Left lung (tissue), 14 donors: ENCODE measurements at regions of chr10 and their contacts with region 1.

Region 1: DNA sequence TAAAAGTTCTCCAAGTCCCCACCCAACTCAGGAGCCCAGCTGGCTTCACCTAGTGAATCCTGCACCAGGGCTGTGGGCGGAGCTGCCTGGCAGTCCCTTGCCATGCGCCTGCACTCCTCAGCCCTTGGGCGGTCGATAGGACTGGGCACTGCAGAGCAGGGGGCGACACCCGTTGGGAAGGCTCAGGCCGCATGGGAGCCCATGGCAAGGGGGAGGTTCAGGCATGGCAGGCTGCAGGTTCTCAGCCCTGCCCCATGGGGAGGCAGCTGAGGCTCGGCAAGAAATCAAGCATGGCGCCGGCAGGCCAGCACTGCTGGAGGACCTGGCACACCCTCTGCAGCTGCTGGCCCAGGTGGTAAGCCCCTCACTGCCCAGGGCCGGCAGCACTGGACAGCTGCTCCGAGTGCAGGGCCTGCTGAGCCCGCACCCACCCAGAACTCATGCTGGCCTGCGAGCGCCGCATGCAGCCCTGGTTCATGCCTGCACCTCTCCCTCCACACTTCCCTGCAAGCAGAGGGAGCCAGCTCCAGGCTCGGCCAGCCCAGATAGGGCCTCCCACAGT is 149.9 kb downstream of the ANKRD30A start:
- DNase-seq: peak in 1 of 4 donors; percentile 59
- ATAC-seq: no peak
- H3K4me3 ChIP-seq: no peak overlapping the region
- H3K27ac ChIP-seq: no peak overlapping the region
- H3K4me1 ChIP-seq: no peaks in the 10 kb centered on the region
- H3K27me3 ChIP-seq: no peaks in the 10 kb centered on the region
- CTCF ChIP-seq: no peak

Region 2: GRCh38 chr10:37125191-37125747 is 150.0 kb before region 1 on chr10 and contains the start of gene ANKRD30A:
- intact Hi-C with region 1: loop called in 1 of 2 experiments (anchors 5 kb)
- DNase-seq: peak in 1 of 4 donors; percentile 73
- ATAC-seq: no peak
- H3K4me3 ChIP-seq: no peak within 1 kb of the TSS
- H3K27ac ChIP-seq: no peak within 1 kb of the TSS
- H3K4me1 ChIP-seq: no peaks in the 10 kb centered on the region
- H3K27me3 ChIP-seq: no peaks in the 10 kb centered on the region
- CTCF ChIP-seq: no peak
- polyA plus RNA-seq, gene ANKRD30A: not detected